SK-N-SH (cell line): ENCODE measurements at regions of chr7 and their contacts with region 1.

Region 1: DNA sequence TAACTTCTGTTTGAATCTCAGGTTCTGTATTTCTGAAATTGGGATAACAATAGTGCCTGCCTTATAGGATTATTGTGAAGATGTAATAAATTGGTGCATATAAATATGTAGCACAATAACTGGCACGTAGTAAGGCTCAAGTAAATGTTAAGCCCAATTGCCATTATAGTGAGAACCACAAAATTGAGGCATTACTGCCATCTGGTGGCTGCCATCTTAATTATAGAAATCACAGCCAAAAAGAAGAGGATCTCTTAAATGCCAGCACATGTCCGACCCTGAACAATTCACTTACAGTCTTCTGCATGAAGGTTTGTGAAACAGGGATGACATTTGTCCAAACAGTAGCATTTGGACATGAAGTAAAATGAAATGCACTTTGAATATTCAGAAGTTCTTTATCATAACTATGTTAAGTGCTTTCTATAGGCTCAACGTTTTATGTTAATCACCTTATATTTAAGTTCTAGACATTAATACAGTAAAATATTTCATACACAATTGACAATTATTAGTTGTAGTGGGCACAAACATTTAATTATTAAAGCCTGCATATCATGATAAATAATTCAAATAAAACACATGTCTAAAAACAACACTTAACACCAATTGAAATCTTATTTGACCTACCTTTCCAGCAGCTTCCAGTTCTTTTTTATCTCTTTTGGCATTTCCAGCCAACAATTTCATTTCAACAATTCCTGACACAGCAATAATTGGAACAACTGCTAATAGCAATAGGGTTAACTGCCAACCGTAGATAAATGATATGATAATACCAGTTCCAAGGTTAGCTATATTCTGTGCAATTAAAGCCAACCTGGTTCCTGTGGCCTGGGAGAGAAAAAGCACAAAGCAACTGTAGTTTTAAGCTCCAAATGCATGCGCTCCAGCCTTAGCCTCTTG is 58.5 kb downstream of the ABCB4 start:
- DNase-seq: peak; percentile 48
- H3K4me3 ChIP-seq: no peak overlapping the region
- H3K27ac ChIP-seq: no peak overlapping the region
- H3K4me1 ChIP-seq: peaks cover 8 to 9% of the 10 kb centered on the region in 2 experiments; a peak in 3 of 4 replicates
- H3K27me3 ChIP-seq: no peaks in the 10 kb centered on the region
- CTCF ChIP-seq: peak; percentile 93
- EP300 ChIP-seq: no peak
- RAD21 ChIP-seq: peak; percentile 98

Region 2: GRCh38 chr7:86748843-86749719 is 667.9 kb before region 1 on chr7:
- CTCF ChIA-PET with region 1: no interaction called
- POLR2A ChIA-PET with region 1: no interaction called
- DNase-seq: peak; percentile 15
- H3K4me3 ChIP-seq: no peak overlapping the region
- H3K27ac ChIP-seq: no peak overlapping the region
- H3K4me1 ChIP-seq: peaks cover 0 to 12% of the 10 kb centered on the region in 2 experiments; a peak in 2 of 4 replicates
- H3K27me3 ChIP-seq: no peaks in the 10 kb centered on the region
- CTCF ChIP-seq: no peak
- EP300 ChIP-seq: peak in 1 of 2 experiments; percentile 26; a peak in 1 of 4 replicates
- RAD21 ChIP-seq: no peak

Region 3: GRCh38 chr7:87325576-87326370 is 91.2 kb before region 1 on chr7:
- CTCF ChIA-PET with region 1: interaction called, 409 read pairs
- POLR2A ChIA-PET with region 1: no interaction called
- DNase-seq: no peak
- H3K4me3 ChIP-seq: no peak overlapping the region
- H3K27ac ChIP-seq: no peak overlapping the region
- H3K4me1 ChIP-seq: no peaks in the 10 kb centered on the region
- H3K27me3 ChIP-seq: no peaks in the 10 kb centered on the region
- CTCF ChIP-seq: peak; percentile 23; the same call in 1 of the 2 replicates
- EP300 ChIP-seq: no peak
- RAD21 ChIP-seq: no peak

Region 4: DNA sequence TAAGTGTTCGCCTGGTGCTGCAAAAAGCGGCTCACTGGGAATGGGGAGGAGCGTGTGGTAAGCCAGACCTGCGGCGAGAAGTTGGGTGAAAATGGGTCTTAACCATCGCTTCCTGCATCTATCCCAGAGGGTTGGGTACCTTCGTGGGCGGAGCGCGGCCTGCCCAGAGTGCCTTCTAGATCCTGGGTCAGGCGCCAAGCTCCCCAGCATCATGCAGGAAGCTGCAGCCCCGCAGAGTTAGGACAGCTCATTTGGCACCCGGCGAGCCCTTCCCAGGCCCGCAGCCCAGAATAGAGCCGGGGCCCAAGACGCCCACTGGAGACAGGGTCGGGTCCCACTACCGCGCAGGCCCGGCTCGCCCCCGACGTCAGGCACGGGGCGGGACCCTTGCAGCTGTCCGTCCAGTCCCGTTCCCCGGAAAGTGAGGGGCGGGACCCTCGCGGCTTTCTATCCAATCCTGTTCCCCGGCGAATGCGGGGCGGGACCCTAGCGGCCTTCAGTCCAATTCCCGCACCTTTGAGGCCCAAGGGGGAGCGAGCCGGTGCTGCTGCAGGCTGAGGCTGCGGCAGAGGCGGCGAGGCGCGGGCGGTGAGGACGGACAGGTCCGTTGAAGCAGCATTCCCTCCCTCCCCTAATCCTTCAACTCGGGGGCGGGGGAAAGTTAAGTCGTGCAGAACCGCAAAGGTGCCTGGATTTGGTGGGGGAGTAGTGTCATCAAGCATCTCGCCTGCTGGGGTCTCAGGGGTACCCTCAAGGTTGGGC is 71.6 kb before region 1 on chr7 and contains the start of gene CROT:
- CTCF ChIA-PET with region 1: interaction called, 13 read pairs
- POLR2A ChIA-PET with region 1: no interaction called
- DNase-seq: peak; percentile 98
- H3K4me3 ChIP-seq: peak within 1 kb of the TSS; percentile 76 to 99
- H3K27ac ChIP-seq: peak within 1 kb of the TSS; percentile 71 to 96
- H3K4me1 ChIP-seq: peaks cover 19 to 37% of the 10 kb centered on the region in 2 experiments; a peak in 3 of 4 replicates
- H3K27me3 ChIP-seq: no peaks in the 10 kb centered on the region
- CTCF ChIP-seq: no peak
- EP300 ChIP-seq: no peak
- RAD21 ChIP-seq: no peak
- polyA plus RNA-seq, gene CROT: 7.9 and 11.2 TPM in 2 replicates

Region 5: GRCh38 chr7:87404674-87405073 is 12.3 kb before region 1 on chr7:
- CTCF ChIA-PET with region 1: interaction called, 53 read pairs
- POLR2A ChIA-PET with region 1: no interaction called
- DNase-seq: no peak
- H3K4me3 ChIP-seq: no peak overlapping the region
- H3K27ac ChIP-seq: no peak overlapping the region
- H3K4me1 ChIP-seq: no peaks in the 10 kb centered on the region
- H3K27me3 ChIP-seq: no peaks in the 10 kb centered on the region
- CTCF ChIP-seq: no peak
- EP300 ChIP-seq: no peak
- RAD21 ChIP-seq: no peak

Region 6: GRCh38 chr7:87435546-87435945 is 18.6 kb after region 1 on chr7:
- CTCF ChIA-PET with region 1: interaction called, 34 read pairs
- POLR2A ChIA-PET with region 1: no interaction called
- DNase-seq: no peak
- H3K4me3 ChIP-seq: no peak overlapping the region
- H3K27ac ChIP-seq: no peak overlapping the region
- H3K4me1 ChIP-seq: no peaks in the 10 kb centered on the region
- H3K27me3 ChIP-seq: no peaks in the 10 kb centered on the region
- CTCF ChIP-seq: no peak
- EP300 ChIP-seq: no peak
- RAD21 ChIP-seq: no peak

Region 7: DNA sequence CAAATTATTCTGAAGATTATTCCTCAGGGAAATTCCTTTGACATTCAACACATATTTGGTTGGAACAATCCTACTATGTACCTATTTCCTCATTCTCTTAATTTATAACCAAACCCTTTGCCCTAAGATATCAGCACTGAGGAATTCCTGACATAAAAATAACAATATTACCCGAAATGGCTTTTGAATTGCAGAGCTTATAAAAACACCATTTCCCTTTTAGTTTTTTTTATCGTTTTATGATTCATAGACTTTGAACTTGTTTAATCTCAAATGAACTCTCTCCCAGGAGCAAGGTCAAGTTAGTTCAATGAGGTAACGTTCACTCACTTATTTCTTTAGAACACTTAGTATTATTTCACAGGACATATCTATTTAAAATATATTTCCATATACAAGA is 191.5 kb after region 1 on chr7:
- CTCF ChIA-PET with region 1: no interaction called
- POLR2A ChIA-PET with region 1: no interaction called
- DNase-seq: no peak
- H3K4me3 ChIP-seq: no peak overlapping the region
- H3K27ac ChIP-seq: no peak overlapping the region
- H3K4me1 ChIP-seq: no peaks in the 10 kb centered on the region
- H3K27me3 ChIP-seq: no peaks in the 10 kb centered on the region
- CTCF ChIP-seq: no peak
- EP300 ChIP-seq: no peak
- RAD21 ChIP-seq: no peak